ENCODE measurements at regions of chr5 and their contacts with region 1.

Region 1: DNA sequence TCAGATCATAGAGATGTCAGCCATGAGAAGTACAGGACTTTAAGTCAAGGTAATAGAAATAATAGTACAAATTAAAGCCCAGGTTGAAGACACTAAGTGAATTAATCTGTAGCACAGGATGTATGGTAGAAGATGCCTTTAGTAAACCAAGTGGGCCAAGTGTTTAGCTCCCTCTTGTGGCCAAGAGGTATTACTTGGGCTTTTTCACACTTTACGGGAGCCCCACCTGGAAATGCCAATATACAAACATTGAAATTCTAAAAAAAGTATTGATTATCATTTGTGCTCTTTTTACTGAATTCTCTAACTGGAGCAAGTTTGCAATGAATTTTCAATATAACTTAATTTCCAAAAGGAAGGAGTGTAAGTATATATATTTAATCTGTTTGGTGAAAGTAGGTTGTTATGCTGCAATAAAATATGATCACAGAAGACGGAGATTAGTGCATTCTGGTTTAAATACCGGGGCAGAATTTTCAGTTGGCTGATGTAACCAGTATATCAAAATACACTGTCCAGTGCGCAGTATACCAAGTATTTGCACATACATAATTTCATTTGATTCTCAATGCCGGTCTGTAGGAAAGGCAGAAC is 84.7 kb downstream of the PARP8 start:
- DNase-seq: peak in 9 of 14 experiments; percentile 10 to 85 (median 39)
- ATAC-seq: peak; percentile 91
- H3K4me3 ChIP-seq: no peak overlapping the region
- H3K4me3 Mint-ChIP-seq: peak overlapping the region; percentile 77
- H3K27ac ChIP-seq: no peak overlapping the region
- H3K27ac Mint-ChIP-seq: peak overlapping the region; percentile 90
- H3K4me1 ChIP-seq: peaks cover 4% of the 10 kb centered on the region
- H3K4me1 Mint-ChIP-seq: peaks cover 61% of the 10 kb centered on the region
- H3K27me3 ChIP-seq: no peaks in the 10 kb centered on the region
- H3K27me3 Mint-ChIP-seq: no peaks in the 10 kb centered on the region
- CTCF ChIP-seq: peak; percentile 90

Region 2: DNA sequence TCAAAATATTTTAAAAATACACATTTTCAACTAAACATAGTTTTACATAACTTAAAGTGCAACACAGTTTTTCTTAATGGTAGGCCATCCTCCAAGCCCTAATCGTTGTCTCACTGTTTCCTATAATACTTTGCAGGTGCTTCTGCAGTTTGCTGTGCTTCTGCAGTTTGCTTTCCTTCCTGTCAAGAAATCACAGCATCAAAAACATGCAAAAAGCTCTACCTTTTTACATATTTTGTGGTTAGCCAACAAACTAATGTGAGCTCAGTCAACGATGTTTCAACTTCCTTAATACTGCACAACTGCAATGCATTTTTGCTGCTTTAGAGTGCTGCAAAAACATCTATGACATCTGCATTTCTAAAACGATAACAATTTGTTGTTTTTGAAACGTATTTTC is 335.2 kb before region 1 on chr5:
- CTCF ChIA-PET with region 1: no interaction called
- POLR2A ChIA-PET with region 1: no interaction called
- intact Hi-C with region 1: loop called in 1 of 2 experiments (anchors 1 kb)
- DNase-seq: peak in 8 of 14 experiments; percentile 4 to 79 (median 31)
- ATAC-seq: peak; percentile 85
- H3K4me3 ChIP-seq: no peak overlapping the region
- H3K4me3 Mint-ChIP-seq: peak overlapping the region; percentile 76
- H3K27ac ChIP-seq: peak overlapping the region in 1 of 2 donors; percentile 64
- H3K27ac Mint-ChIP-seq: peak overlapping the region; percentile 92
- H3K4me1 ChIP-seq: peaks cover 36% of the 10 kb centered on the region
- H3K4me1 Mint-ChIP-seq: peaks cover 96% of the 10 kb centered on the region
- H3K27me3 ChIP-seq: no peaks in the 10 kb centered on the region
- H3K27me3 Mint-ChIP-seq: no peaks in the 10 kb centered on the region
- CTCF ChIP-seq: no peak

Measured in CD4-positive, alpha-beta T cell (primary cell).